ENCODE measurements at regions of chr7 and their contacts with region 1.

Region 1: GRCh38 chr7:100705753-100706671 is at the start of gene POP7:
- DNase-seq: peak; percentile 99 to 100 (median 100)
- ATAC-seq: peak; percentile 98
- H3K4me3 ChIP-seq: peak within 1 kb of the TSS; percentile 52
- H3K4me1 ChIP-seq: peaks cover 13% of the 10 kb centered on the region
- CTCF ChIP-seq: no peak
- total RNA-seq, gene POP7: 24.8 to 28.9 (median 26.8) TPM

Region 2: DNA sequence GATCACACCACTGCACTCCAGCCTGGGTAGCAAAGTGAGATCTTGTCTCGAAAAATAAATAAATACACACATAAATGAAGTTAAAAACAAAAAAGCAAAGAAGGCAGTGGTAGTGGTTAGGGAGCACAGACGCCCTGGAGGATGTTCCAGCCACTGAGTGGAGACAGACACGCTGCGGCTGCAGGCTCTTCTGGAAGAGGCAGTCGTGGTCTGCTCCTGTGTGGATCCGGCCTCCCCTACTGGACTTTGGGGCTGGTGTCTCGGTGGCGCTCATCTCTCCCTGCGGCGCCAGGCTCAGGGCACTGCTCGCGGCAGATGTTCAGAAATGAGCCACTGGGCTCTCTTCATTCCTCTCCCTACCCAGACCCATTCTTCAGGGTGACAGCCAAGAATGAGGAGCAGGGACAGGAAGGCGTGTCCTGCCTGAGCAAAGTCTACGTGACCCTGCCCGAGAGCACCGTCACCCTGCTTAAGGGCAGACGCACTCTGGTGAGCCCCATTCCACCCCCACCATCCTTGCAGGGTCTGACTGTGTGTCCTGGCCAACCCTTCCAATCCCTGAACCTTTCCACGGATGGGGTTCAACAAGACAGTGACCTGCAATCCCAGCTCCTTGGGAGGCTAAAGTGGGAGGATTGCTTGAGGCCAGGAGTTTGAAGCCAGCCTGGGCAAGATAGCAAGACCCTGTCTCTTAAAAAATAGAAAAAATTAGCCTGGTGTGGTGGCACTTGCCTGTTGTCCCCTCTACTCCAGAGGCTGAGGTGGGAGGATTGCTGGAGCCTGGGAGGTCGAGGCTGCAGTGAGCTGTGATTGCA is 53.6 kb after region 1 on chr7:
- intact Hi-C with region 1: no loop called
- DNase-seq: peak in 1 of 3 donors; percentile 8
- ATAC-seq: peak; percentile 72
- H3K4me3 ChIP-seq: no peak overlapping the region
- H3K4me1 ChIP-seq: no peaks in the 10 kb centered on the region
- CTCF ChIP-seq: no peak

Region 3: GRCh38 chr7:100773491-100773890 is 67.5 kb after region 1 on chr7:
- intact Hi-C with region 1: no loop called
- DNase-seq: no peak
- ATAC-seq: no peak
- H3K4me3 ChIP-seq: no peak overlapping the region
- H3K4me1 ChIP-seq: no peaks in the 10 kb centered on the region
- CTCF ChIP-seq: no peak

Region 4: DNA sequence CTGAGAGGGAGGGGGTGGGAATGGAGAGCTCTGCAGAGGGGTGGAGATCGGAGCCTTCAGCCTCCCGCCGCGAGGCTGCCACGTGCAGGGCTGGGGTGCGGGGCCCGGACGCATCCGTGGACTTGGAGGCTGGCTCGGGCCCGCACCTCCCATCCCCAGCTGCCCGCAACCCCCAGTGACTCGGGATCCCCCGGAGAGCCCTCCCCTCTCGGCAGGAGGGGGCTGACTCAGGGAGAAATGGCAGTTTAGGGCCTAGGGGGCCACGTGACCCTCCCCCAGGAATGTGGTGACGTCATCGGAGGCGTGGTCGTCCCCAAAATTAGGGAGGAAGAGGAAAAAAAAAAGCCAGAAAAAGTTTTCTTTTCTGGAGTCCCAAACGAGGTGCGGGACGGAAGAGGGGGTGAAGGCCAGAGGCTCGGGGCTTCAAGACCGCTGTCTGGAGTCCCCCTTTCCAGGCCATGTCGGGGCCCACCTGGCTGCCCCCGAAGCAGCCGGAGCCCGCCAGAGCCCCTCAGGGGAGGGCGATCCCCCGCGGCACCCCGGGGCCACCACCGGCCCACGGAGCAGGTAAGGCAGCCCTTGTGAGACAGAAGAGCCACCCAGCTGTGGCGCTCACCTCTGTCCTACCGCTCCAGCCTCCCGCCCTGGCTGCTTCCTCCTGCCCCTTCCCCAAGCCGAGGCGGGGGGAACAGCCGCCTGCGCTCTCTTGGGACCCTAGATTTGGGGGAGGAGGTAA is 161.2 kb after region 1 on chr7 and contains the start of gene TRIP6:
- intact Hi-C with region 1: loop called in 1 of 2 experiments (anchors 10 kb)
- DNase-seq: peak; percentile 86 to 90 (median 87)
- ATAC-seq: peak; percentile 60
- H3K4me3 ChIP-seq: peak within 1 kb of the TSS; percentile 29
- H3K4me1 ChIP-seq: peaks cover 6% of the 10 kb centered on the region
- CTCF ChIP-seq: no peak
- total RNA-seq, gene TRIP6: 27.8 to 42.7 (median 30.0) TPM